Activated CD4-positive, alpha-beta T cell treated with anti-CD3 and anti-CD28 coated beads for 36 hours (primary cell): ENCODE measurements at regions of chr11 and their contacts with region 1.

Region 1: GRCh38 chr11:86608251-86608799 is 64.1 kb downstream of the ME3 start:
- DNase-seq: peak; percentile 68
- ATAC-seq: peak; percentile 87
- H3K4me3 Mint-ChIP-seq: no peak overlapping the region
- H3K27ac Mint-ChIP-seq: no peak overlapping the region
- H3K4me1 Mint-ChIP-seq: peaks cover 17% of the 10 kb centered on the region
- H3K27me3 Mint-ChIP-seq: no peaks in the 10 kb centered on the region

Region 2: DNA sequence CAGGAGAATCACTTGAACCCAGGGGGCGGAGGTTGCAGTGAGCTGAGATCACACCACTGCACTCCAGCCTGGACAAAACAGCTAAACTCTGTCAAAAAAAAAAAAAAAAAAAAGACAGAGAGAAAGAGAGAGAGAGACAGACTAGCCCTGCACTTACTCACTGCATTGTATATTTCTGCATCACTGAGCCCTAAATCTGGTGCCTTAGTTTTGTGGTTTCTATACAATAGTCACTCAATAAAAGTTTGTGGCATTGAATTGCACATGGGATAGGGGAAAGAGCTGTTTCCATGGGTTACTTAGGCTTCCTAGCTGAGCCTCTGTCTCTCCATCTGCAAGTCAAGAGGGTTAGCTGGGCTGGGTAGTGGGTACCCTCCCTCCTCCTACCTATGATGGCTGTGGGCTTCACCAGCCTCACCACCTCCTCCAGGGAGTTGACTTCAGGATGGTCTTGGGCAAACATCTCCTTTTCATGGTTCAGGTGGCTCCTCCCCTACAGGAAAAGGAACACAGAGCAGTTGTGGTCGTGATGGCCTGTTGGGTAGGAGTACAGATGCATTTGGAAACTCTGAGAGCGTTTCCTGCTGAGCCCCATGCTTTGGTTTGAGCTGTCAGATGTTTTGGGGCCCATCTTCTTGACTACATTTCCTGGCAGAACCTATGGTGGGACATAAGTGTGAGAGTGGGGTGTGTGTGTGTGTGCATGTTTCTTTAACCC is 160.4 kb before region 1 on chr11:
- CTCF ChIA-PET with region 1: interaction called, 11 read pairs
- POLR2A ChIA-PET with region 1: no interaction called
- intact Hi-C with region 1: no loop called
- DNase-seq: peak; percentile 64
- ATAC-seq: peak; percentile 91
- H3K4me3 Mint-ChIP-seq: no peak overlapping the region
- H3K27ac Mint-ChIP-seq: no peak overlapping the region
- H3K4me1 Mint-ChIP-seq: peaks cover 21% of the 10 kb centered on the region
- H3K27me3 Mint-ChIP-seq: no peaks in the 10 kb centered on the region

Region 3: GRCh38 chr11:86469491-86470393 is 138.6 kb before region 1 on chr11:
- CTCF ChIA-PET with region 1: interaction called, 13 read pairs
- POLR2A ChIA-PET with region 1: no interaction called
- intact Hi-C with region 1: no loop called
- DNase-seq: no peak
- ATAC-seq: no peak
- H3K4me3 Mint-ChIP-seq: no peak overlapping the region
- H3K27ac Mint-ChIP-seq: no peak overlapping the region
- H3K4me1 Mint-ChIP-seq: peaks cover 7% of the 10 kb centered on the region
- H3K27me3 Mint-ChIP-seq: no peaks in the 10 kb centered on the region

Region 4: GRCh38 chr11:86637988-86638387 is 29.7 kb after region 1 on chr11:
- CTCF ChIA-PET with region 1: interaction called, 15 read pairs
- POLR2A ChIA-PET with region 1: no interaction called
- intact Hi-C with region 1: no loop called
- DNase-seq: peak; percentile 32
- ATAC-seq: peak; percentile 86
- H3K4me3 Mint-ChIP-seq: no peak overlapping the region
- H3K27ac Mint-ChIP-seq: no peak overlapping the region
- H3K4me1 Mint-ChIP-seq: peaks cover 37% of the 10 kb centered on the region
- H3K27me3 Mint-ChIP-seq: peaks cover 2% of the 10 kb centered on the region

Region 5: GRCh38 chr11:86818466-86819192 is 210.3 kb after region 1 on chr11:
- CTCF ChIA-PET with region 1: interaction called, 8 read pairs
- POLR2A ChIA-PET with region 1: no interaction called
- intact Hi-C with region 1: loop called (anchors 1 to 2 kb)
- DNase-seq: no peak
- ATAC-seq: no peak
- H3K4me3 Mint-ChIP-seq: no peak overlapping the region
- H3K27ac Mint-ChIP-seq: no peak overlapping the region
- H3K4me1 Mint-ChIP-seq: peaks cover 6% of the 10 kb centered on the region
- H3K27me3 Mint-ChIP-seq: peaks cover 27% of the 10 kb centered on the region

Region 6: DNA sequence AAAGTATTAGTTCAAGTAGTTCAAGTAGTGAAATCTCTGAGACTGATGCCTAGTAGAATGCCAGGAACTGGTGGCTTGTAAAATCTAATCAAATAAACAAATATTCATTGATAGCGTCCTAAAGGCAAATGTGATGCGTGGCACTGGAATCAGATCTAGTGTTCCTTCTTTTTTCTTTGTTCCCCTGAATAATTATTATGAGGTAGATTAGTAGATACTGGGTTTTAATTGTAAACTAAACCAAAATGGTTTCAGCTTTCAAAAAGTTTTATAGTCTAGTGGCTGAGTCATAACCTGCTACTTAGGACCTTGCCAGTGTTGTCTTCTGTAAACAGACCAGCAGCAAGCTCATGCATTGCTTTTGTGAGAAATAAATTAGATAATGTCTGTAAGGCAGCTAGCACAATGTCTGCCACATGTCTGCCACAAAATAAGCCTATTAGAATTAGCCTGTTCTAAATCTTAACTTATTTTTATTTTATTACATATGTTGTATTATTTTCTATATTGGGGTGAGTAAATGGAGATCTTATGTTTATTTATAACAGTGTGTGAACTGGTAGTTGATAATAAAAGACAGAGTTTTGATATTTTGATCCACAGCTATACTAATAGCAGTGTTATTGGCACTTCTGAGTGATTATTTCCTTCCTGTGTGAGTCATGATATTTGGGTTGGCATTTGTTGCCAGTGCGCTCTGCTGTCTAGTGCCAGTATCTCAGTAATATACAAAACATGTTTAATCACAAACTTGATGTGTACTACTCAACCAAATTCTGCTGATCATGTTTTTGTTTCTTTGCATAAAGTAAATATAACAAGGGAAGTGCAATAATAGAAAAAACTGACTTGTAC is 565.1 kb after region 1 on chr11:
- CTCF ChIA-PET with region 1: no interaction called
- POLR2A ChIA-PET with region 1: no interaction called
- intact Hi-C with region 1: no loop called
- DNase-seq: no peak
- ATAC-seq: no peak
- H3K4me3 Mint-ChIP-seq: no peak overlapping the region
- H3K27ac Mint-ChIP-seq: no peak overlapping the region
- H3K4me1 Mint-ChIP-seq: peaks cover 6% of the 10 kb centered on the region
- H3K27me3 Mint-ChIP-seq: no peaks in the 10 kb centered on the region